Left cardiac atrium (tissue), 4 donors: ENCODE measurements at regions of chr6 and their contacts with region 1.

Region 1: GRCh38 chr6:87200469-87201174 is 45.3 kb downstream of the ZNF292 start:
- DNase-seq: peak; percentile 34
- ATAC-seq: no peak

Region 2: DNA sequence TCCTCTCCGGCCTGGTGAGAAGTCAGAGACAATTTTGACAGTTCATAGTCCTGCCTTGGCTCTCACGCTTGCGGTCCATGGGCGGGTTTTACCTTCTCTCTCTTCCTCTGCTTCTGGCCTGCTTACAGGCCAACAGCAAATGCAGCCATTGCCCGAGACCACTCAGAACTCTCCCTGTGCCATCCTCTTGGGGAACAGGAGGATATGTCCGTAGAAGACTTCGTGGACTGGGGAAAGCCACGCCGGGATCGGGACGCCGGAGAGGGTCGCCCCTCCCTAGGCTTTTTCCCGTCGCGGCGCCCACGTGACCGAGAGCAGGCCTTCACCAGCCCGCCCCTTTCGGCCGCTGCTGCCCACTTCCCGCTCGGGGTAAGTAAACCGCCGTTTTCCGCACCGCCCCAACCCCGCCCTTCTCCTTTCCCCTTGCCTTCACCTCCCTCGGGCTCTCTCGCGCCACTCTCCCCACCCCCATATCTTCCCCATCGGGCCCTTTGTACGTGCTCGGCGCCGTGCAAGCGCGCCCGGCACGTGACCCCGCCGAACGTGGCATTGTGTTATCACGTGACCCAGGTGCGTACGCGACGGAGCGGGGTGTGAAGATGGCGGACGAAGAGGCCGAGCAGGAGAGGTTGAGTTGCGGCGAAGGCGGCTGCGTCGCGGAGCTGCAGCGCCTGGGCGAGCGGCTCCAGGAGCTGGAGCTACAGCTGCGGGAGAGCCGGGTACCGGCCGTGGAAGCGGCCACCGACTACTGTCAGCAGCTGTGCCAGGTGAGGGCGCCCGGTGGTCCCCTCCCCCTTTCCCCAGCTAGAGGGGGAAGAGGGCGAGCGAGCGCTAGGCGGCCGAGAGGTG is 45.4 kb before region 1 on chr6 and contains the start of gene ZNF292:
- intact Hi-C with region 1: loop called in 1 of 2 experiments (anchors 10 kb)
- DNase-seq: peak; percentile 97
- ATAC-seq: peak; percentile 87 to 94
- total RNA-seq, gene ZNF292: 37.1 to 39.1 TPM

Region 3: DNA sequence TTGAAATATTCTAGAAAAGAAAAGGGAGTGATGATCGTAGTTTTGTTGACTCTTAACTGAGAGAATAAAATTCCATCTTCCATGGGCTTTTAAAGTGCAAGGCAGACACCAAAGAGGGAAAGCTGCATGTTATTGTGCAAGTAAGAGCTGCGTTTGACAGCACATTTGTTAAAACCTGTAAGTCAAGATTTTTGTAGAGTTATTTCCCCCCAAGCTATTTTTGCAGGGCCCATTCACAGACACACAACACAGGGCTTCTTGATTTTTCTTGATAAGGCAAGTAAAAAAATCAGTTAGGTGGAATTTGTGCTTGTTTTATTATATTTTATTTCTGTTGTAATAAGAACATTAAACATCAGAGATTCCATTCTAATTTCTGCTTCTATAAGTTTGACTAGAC is 221.0 kb after region 1 on chr6:
- intact Hi-C with region 1: no loop called
- DNase-seq: no peak
- ATAC-seq: no peak